ENCODE measurements at regions of chr7 and their contacts with region 1.

Region 1: GRCh38 chr7:99447943-99448342 is 9.2 kb downstream of the CPSF4 start:
- DNase-seq: peak; percentile 59 to 60
- ATAC-seq: peak; percentile 80 to 88; a peak in 5 of 6 replicates
- H3K4me3 ChIP-seq: no peak overlapping the region
- H3K27ac ChIP-seq: no peak overlapping the region
- H3K4me1 ChIP-seq: no peaks in the 10 kb centered on the region
- CTCF ChIP-seq: peak; percentile 36
- EP300 ChIP-seq: no peak
- POLR2A ChIP-seq: no peak
- RAD21 ChIP-seq: peak; percentile 27 to 37; a peak in 3 of 5 replicates

Region 2: DNA sequence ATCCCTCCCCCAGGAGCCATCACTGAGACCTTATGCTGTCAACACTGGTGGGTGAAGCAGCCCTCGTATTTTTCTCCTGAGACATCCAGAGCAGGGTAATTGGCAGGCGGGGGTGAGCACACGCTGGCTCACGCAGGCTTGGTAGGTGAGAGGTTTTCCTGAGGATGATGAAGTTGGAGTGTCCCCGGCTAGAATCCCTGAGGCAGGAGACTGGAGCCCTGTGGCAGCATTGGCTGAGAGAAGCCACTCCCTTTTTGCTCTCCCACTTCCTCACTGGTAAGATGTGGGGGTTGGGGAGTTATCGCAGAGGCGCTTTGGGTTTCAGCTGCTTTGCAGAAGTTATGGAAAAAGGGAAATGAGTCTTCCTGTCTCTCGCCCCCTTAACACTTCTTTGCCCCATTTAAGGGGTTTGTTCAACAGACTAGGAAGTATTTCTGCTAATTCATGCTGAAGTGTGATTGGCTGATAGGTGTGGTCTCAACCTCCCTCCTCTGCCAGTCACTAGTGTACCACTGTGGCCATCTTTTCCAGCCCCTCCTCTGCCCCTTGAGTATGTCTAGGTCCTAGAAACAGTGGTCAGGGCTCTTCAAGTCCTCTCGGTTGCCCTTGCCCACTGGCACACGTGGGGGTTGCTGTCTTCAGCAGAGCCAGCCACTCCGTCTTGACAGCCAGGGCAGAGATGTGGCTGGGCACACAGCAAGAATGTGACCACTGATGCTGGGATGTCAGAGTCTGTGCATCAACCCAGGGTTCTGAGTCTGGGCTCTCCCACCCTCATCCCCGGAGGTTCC is 67.7 kb before region 1 on chr7:
- CTCF ChIA-PET with region 1: no interaction called
- POLR2A ChIA-PET with region 1: no interaction called
- DNase-seq: no peak
- ATAC-seq: peak; percentile 14 to 23; a peak in 3 of 6 replicates
- H3K4me3 ChIP-seq: no peak overlapping the region
- H3K27ac ChIP-seq: peak overlapping the region; percentile 52 to 78; a peak in 5 of 6 replicates
- H3K4me1 ChIP-seq: peaks cover 54% of the 10 kb centered on the region
- CTCF ChIP-seq: no peak
- EP300 ChIP-seq: no peak
- POLR2A ChIP-seq: no peak
- RAD21 ChIP-seq: no peak

Region 3: DNA sequence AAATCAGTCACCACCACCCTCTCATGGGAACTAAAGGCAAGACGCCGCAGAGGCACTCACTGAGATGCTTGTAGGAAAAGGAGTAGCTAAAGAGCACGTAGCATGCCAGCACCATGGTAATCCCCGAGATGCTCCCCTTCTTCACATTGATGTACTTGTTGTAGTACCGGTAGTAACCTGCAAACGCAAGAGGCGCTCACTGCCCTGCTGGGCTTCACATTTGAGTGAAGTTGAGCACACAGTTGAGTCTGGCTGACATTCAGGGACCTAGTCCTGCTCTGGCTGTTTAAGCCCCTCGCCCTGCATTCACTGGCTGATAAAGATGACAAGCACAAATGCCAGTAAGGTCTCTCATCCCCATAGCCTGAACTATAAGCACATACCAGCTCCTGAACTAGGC is 11.1 kb after region 1 on chr7:
- CTCF ChIA-PET with region 1: interaction called, 92 read pairs
- POLR2A ChIA-PET with region 1: interaction called, 4 read pairs
- DNase-seq: peak in 1 of 2 experiments; percentile 63
- ATAC-seq: peak; percentile 51 to 78; a peak in 3 of 6 replicates
- H3K4me3 ChIP-seq: no peak overlapping the region
- H3K27ac ChIP-seq: no peak overlapping the region
- H3K4me1 ChIP-seq: no peaks in the 10 kb centered on the region
- CTCF ChIP-seq: peak; percentile 17; the same call in 2 of the 3 replicates
- EP300 ChIP-seq: no peak
- POLR2A ChIP-seq: no peak
- RAD21 ChIP-seq: peak in 1 of 2 experiments; percentile 27; a peak in 1 of 5 replicates

Measured in A549 (cell line).